Mucosa of descending colon (tissue), 3 donors: ENCODE measurements at regions of chr4 and their contacts with region 1.

Region 1: GRCh38 chr4:77240469-77241066 is 83.6 kb downstream of the CCNG2 start:
- DNase-seq: peak; percentile 51 to 82 (median 65)
- ATAC-seq: peak; percentile 69
- H3K4me3 ChIP-seq: no peak overlapping the region
- H3K4me1 ChIP-seq: no peaks in the 10 kb centered on the region
- CTCF ChIP-seq: peak; percentile 40

Region 2: GRCh38 chr4:77095101-77095821 is 145.3 kb before region 1 on chr4:
- intact Hi-C with region 1: no loop called
- DNase-seq: peak; percentile 69 to 90 (median 76)
- ATAC-seq: peak; percentile 97
- H3K4me3 ChIP-seq: no peak overlapping the region
- H3K4me1 ChIP-seq: no peaks in the 10 kb centered on the region
- CTCF ChIP-seq: peak; percentile 81

Region 3: DNA sequence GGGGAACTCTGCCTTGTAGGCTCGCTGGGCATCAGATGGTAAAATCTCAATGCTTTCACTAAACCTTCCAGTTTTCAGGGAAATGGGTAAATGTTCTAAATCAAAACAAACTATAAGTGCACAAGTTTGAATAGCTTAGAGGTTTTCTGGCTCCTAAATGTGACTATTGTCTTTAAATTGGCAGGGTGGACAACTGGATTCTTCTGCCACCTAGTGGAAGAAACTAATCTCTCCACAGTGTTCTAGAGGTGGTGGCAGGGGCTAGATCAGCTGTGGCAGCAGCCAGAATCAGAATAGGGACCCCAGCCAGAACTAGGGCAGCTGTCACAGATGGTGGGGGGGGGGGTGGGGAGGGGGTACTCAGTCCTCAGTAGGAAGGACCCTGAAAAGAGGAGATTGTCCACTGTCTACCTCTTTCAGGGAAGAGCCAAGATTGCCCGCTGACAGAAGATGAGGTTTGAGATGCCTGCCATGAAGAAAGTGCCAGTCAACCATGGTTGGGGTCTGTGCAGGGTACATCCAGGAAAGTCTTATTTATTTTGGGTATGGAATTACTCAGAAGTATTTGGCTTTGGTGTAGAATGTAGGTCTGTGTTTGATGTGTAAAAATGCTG is 117.9 kb after region 1 on chr4:
- intact Hi-C with region 1: loop called in 1 of 2 experiments (anchors 5 kb)
- DNase-seq: peak in 1 of 3 donors; percentile 38
- ATAC-seq: peak; percentile 42
- H3K4me3 ChIP-seq: no peak overlapping the region
- H3K4me1 ChIP-seq: no peaks in the 10 kb centered on the region
- CTCF ChIP-seq: peak; percentile 15